ENCODE measurements at regions of chr18 and their contacts with region 1.

Region 1: GRCh38 chr18:76620321-76621170 is 125.5 kb upstream of the ZNF516 start:
- DNase-seq: peak; percentile 34
- ATAC-seq: peak; percentile 95
- H3K4me3 ChIP-seq: no peak overlapping the region
- H3K27ac ChIP-seq: no peak overlapping the region
- H3K4me1 ChIP-seq: peaks cover 5 to 14% of the 10 kb centered on the region in 2 experiments; a peak in 3 of 4 replicates
- H3K27me3 ChIP-seq: no peaks in the 10 kb centered on the region
- CTCF ChIP-seq: peak; percentile 38 to 57 (median 38); a peak in 5 of 6 replicates
- POLR2A ChIP-seq: no peak
- RAD21 ChIP-seq: peak; percentile 68

Region 2: DNA sequence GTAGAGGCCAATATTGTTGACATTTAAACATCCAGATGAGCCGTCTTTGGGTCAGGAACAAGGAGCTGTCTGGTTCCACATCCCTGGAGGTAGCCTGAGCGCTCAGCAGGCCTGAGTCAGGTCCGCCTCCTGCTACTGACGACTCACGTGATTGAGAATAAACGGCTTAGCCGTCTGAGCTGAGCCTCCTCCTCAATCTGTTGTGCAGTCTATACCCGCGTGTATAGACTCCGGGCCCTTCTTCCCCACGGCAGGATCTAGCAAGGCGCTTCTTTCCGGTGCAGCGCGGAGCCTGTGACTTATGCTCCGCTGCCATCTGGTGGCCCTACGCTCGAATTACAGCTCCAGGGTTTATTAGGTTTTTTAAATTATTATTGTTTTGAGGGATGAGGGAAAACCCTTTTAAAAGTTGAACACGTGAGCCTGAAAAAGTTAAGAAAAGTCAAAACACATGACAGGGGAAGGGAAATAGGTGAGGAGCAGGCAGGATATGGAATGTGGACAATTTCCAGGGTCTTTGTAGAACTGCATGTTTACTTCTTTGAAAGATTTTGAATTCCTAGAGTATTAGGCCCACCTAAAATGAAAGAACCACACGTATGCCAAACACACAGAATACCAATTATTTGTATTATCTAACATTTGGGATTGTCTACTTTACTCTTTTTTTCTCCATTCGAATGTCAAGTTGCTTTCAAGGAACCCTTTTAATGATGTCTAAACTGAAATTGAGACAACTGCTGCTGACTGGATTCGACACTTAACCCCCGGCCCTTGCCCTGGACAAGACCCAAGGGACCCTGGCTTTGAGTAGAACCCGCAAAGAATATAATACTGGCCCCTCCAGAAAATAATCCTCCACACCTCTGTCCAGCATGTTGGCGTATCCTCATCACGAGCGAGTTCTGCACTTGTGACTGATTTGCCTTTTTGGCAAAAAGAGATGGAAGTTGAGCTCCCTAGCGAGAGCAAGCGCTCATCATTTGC is 89.4 kb after region 1 on chr18:
- CTCF ChIA-PET with region 1: no interaction called
- POLR2A ChIA-PET with region 1: no interaction called
- RAD21 ChIA-PET with region 1: no interaction called
- intact Hi-C with region 1: loop called (anchors 5 kb)
- DNase-seq: peak; percentile 52
- ATAC-seq: peak; percentile 95
- H3K4me3 ChIP-seq: no peak overlapping the region
- H3K27ac ChIP-seq: no peak overlapping the region
- H3K4me1 ChIP-seq: peaks cover 0 to 3% of the 10 kb centered on the region in 2 experiments; a peak in 2 of 4 replicates
- H3K27me3 ChIP-seq: no peaks in the 10 kb centered on the region
- CTCF ChIP-seq: peak; percentile 79 to 94 (median 79)
- POLR2A ChIP-seq: no peak
- RAD21 ChIP-seq: peak; percentile 95

Region 3: DNA sequence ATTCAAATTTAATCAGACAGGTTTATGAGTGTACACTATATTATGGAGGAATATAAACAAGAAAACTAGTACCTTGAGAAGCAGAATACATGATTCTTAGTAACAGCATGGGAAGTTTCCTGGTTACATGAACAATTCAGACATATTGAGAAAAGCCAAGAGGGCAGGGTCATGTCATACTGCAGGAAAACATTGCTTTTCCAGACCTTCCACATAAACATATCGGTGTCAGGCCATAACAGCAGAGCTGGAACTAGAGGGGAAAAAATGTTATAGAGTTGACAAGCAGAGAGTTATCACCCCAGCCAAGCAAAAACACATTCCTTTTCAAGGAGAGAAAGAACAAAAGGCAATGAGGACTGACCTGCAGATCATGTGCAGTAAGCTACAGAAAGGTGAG is 127.1 kb after region 1 on chr18:
- CTCF ChIA-PET with region 1: no interaction called
- POLR2A ChIA-PET with region 1: no interaction called
- RAD21 ChIA-PET with region 1: no interaction called
- intact Hi-C with region 1: no loop called
- DNase-seq: no peak
- ATAC-seq: no peak
- H3K4me3 ChIP-seq: no peak overlapping the region
- H3K27ac ChIP-seq: no peak overlapping the region
- H3K4me1 ChIP-seq: no peaks in the 10 kb centered on the region
- H3K27me3 ChIP-seq: no peaks in the 10 kb centered on the region
- CTCF ChIP-seq: no peak
- POLR2A ChIP-seq: no peak
- RAD21 ChIP-seq: no peak